Activated T-helper 1 cell treated with anti-CD3 and anti-CD28 coated beads, Interleukin-12 subunit alpha, Interleukin-12 subunit beta, Interleukin-2, Interleukin-4 antibody, amounts not matched to agents 30 ng/mL and 10 ng/mL and 1 ng/mL, durations not matched to agents 14 hours and 24 hours and 36 hours (primary cell): ENCODE measurements at regions of chr2 and their contacts with region 1.

Region 1: GRCh38 chr2:63424329-63425078 is 163.8 kb downstream of the WDPCP start:
- DNase-seq: no peak
- H3K4me3 Mint-ChIP-seq: no peak overlapping the region
- H3K27ac Mint-ChIP-seq: no peak overlapping the region
- H3K4me1 Mint-ChIP-seq: peaks cover 5% of the 10 kb centered on the region
- H3K27me3 Mint-ChIP-seq: no peaks in the 10 kb centered on the region

Region 2: DNA sequence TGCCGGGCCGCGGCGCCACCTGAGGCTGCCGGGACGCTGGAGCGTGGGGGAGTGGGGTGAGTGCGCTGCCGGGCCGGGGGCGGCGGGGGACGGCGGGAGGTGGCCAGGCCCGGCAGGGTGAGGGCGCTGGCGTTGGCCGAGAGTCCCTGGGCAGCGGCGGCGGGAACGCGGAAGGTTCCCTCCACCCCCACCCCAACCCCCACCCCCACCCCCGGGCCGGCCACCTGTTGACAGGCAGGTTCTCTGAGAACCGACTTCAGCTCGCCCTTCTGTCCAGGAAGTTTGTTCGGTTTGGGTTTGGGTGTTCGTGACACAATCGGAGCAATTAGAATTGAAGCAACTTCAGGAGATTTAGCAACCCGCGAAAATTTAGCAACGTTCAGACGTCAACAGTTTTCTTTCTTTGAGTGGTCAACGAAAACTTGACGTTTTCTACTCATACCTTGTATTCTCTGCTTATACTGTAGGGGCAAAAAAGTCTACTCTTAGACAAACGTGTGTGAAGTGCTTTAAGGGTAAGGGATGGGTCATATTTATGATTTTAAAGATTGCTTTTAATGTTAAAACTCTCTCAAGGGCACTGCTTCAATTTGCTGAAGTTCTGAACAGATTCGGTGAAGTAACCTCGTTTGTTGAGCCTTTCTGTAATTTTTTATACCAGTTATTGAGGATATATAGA is 364.6 kb before region 1 on chr2:
- intact Hi-C with region 1: loop called (anchors 5 kb)
- DNase-seq: no peak
- H3K4me3 Mint-ChIP-seq: peak overlapping the region; percentile 56
- H3K27ac Mint-ChIP-seq: peak overlapping the region; percentile 68
- H3K4me1 Mint-ChIP-seq: peaks cover 35% of the 10 kb centered on the region
- H3K27me3 Mint-ChIP-seq: peaks cover 71% of the 10 kb centered on the region